Posterior cingulate gyrus (tissue), 11 donors: ENCODE measurements at regions of chr16 and their contacts with region 1.

Region 1: DNA sequence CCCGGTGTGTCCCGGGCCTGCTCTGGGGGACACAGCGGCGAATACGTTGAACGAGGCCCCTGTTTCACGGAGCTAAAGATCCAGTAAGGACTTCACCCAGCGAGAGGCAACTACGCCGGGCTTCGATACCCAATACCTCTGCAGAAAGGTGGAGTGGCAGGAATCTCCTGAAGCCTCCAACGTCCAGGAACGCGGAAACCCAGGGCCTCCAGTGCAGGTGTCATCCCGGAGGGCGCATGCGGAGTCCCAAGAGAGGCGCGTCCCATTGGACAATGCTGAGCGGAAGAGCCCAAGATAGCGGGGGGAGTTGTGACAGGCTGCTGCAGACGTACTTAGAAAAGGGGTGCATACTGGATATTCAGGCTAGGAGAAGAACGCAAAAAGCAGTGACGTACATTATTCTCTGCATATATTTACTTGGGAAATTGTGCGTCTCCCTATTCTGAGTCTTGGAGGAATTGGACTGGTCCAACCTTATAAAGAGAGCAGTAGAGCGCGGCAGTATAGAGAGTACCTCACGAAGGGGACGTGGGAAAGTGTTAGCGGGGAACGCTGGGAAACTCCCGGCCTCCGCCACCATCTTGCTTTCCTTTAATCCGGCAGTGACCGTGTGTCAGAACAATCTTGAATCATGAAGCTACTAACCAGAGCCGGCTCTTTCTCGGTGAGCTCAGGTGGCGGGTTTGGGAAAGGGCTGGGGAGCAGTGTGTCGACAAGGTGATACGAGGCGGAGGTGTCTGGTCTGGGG is at the start of gene UQCRC2:
- DNase-seq: peak; percentile 86 to 99 (median 91)

Region 2: GRCh38 chr16:22007509-22008214 is 54.7 kb after region 1 on chr16 and contains the start of gene MOSMO:
- intact Hi-C with region 1: loop called (anchors 5 kb)
- DNase-seq: peak; percentile 71 to 97 (median 80)